Right ventricle myocardium inferior (tissue), 1 donor: ENCODE measurements at regions of chr11 and their contacts with region 1.

Region 1: GRCh38 chr11:69918938-69919650 is 99.9 kb upstream of the FGF3 start:
- DNase-seq: peak; percentile 87
- ATAC-seq: peak; percentile 80

Region 2: GRCh38 chr11:69497221-69497787 is 421.8 kb before region 1 on chr11:
- intact Hi-C with region 1: no loop called
- DNase-seq: peak; percentile 90
- ATAC-seq: peak; percentile 96

Region 3: GRCh38 chr11:69674267-69674906 is 244.7 kb before region 1 on chr11:
- intact Hi-C with region 1: no loop called
- DNase-seq: no peak
- ATAC-seq: peak; percentile 2

Region 4: GRCh38 chr11:69943066-69943465 is 24.0 kb after region 1 on chr11:
- intact Hi-C with region 1: loop called (anchors 1 kb)
- DNase-seq: no peak
- ATAC-seq: no peak